Activated CD8-positive, alpha-beta T cell treated with anti-CD3 and anti-CD28 coated beads for 36 hours (primary cell): ENCODE measurements at regions of chr9 and their contacts with region 1.

Region 1: DNA sequence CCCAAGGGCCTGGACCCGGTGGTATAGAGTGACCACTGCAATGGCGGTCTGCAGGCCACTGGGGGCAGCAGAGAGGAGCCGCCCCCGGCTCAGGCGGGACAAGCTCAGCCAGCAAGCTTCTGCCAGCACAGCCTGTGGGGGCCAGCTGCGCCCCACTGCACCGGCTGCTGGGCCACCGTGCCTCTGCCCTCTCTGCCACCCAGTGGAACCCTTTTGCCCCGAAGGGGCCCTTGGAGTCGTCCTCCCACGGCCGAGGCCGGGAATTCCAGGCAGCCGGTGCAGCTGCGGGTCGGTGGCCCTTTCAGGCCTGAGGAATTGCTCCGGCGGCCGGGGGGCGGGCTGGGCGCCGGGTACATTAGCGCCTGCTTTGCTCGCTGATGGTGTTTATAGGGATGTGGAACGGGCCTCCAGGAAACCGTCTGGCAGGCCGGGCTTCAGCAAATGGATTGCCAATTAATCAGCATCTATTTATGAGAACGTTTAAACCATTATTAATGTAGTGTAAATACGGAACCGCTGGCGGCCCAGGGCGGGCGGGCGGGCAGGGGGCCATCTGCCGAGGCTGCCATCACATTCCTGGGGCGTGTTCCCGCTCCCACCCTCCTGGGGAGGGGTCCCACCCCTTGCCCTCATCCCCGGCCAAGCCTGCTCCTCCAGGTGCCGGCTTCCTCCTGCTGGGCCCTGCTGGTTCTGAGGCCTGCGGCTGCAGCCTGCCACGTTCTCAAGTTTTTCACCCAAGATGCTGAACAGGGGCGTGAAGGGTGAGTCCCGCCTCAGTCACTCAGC is 127.4 kb downstream of the BARX1 start:
- DNase-seq: peak; percentile 53
- ATAC-seq: peak; percentile 94
- H3K4me3 Mint-ChIP-seq: no peak overlapping the region
- H3K27ac Mint-ChIP-seq: no peak overlapping the region
- H3K4me1 Mint-ChIP-seq: peaks cover 7% of the 10 kb centered on the region
- H3K27me3 Mint-ChIP-seq: peaks cover 29% of the 10 kb centered on the region
- CTCF ChIP-seq: peak; percentile 75

Region 2: GRCh38 chr9:93810028-93810971 is 17.4 kb before region 1 on chr9:
- CTCF ChIA-PET with region 1: interaction called, 10 read pairs
- POLR2A ChIA-PET with region 1: no interaction called
- intact Hi-C with region 1: no loop called
- DNase-seq: no peak
- ATAC-seq: no peak
- H3K4me3 Mint-ChIP-seq: no peak overlapping the region
- H3K27ac Mint-ChIP-seq: no peak overlapping the region
- H3K4me1 Mint-ChIP-seq: no peaks in the 10 kb centered on the region
- H3K27me3 Mint-ChIP-seq: peaks cover 6% of the 10 kb centered on the region
- CTCF ChIP-seq: no peak

Region 3: GRCh38 chr9:93843396-93843795 is 15.7 kb after region 1 on chr9:
- CTCF ChIA-PET with region 1: interaction called, 13 read pairs
- POLR2A ChIA-PET with region 1: no interaction called
- intact Hi-C with region 1: no loop called
- DNase-seq: no peak
- ATAC-seq: no peak
- H3K4me3 Mint-ChIP-seq: no peak overlapping the region
- H3K27ac Mint-ChIP-seq: no peak overlapping the region
- H3K4me1 Mint-ChIP-seq: no peaks in the 10 kb centered on the region
- H3K27me3 Mint-ChIP-seq: peaks cover 30% of the 10 kb centered on the region
- CTCF ChIP-seq: no peak